Panc1 (cell line): ENCODE measurements at regions of chr1 and their contacts with region 1.

Region 1: GRCh38 chr1:68994096-68994495 is 497.2 kb upstream of the DEPDC1 start:
- DNase-seq: no peak
- ATAC-seq: no peak
- H3K4me3 ChIP-seq: no peak overlapping the region
- H3K27ac ChIP-seq: no peak overlapping the region
- H3K4me1 ChIP-seq: no peaks in the 10 kb centered on the region
- H3K27me3 ChIP-seq: no peaks in the 10 kb centered on the region
- CTCF ChIP-seq: no peak

Region 2: GRCh38 chr1:68703921-68704354 is 290.2 kb before region 1 on chr1:
- CTCF ChIA-PET with region 1: no interaction called
- POLR2A ChIA-PET with region 1: no interaction called
- in situ Hi-C with region 1: no loop called
- intact Hi-C with region 1: loop called (anchors 5 kb)
- DNase-seq: no peak
- ATAC-seq: no peak
- H3K4me3 ChIP-seq: no peak overlapping the region
- H3K27ac ChIP-seq: no peak overlapping the region
- H3K4me1 ChIP-seq: no peaks in the 10 kb centered on the region
- H3K27me3 ChIP-seq: no peaks in the 10 kb centered on the region
- CTCF ChIP-seq: no peak

Region 3: DNA sequence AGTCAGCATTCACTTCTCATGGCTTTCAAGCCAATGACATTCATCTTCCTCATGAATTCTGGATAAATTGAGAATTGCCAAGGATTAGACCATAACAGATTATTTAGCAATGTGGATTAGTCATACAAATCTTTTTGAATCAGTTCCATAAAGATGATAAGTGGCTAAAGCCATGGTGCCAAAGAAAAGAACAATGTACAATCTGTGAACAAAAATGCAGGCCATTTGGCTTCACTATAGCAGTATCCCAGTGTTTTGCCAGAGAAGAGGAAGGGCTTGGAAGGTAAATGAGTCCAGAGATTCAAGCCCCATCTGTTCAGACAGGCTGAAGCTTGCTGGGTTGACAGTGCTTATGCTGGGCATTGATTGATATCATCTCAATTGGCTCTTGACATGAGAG is 197.2 kb after region 1 on chr1:
- CTCF ChIA-PET with region 1: no interaction called
- POLR2A ChIA-PET with region 1: no interaction called
- in situ Hi-C with region 1: no loop called
- intact Hi-C with region 1: no loop called
- DNase-seq: no peak
- ATAC-seq: no peak
- H3K4me3 ChIP-seq: no peak overlapping the region
- H3K27ac ChIP-seq: no peak overlapping the region
- H3K4me1 ChIP-seq: no peaks in the 10 kb centered on the region
- H3K27me3 ChIP-seq: no peaks in the 10 kb centered on the region
- CTCF ChIP-seq: no peak

Region 4: DNA sequence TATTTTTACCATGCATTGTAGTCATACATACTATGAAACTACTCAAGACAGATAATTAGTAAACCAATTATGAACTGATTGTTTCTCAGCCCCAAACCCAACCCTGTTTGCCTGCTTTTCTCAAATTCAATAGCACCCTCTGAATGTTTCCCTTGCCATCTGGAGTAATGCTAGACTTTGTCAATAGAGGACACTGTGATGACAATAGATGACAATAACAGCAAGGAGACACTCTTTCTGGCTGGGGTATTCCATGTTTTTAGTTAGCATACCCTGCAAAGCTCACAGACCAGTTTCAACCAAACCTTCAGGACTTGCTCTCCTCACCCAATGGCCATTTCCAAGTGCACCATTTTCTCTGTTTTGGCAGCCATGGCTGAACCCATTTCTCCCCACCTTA is 465.1 kb after region 1 on chr1:
- CTCF ChIA-PET with region 1: no interaction called
- POLR2A ChIA-PET with region 1: no interaction called
- in situ Hi-C with region 1: no loop called
- intact Hi-C with region 1: no loop called
- DNase-seq: no peak
- ATAC-seq: no peak
- H3K4me3 ChIP-seq: no peak overlapping the region
- H3K27ac ChIP-seq: no peak overlapping the region
- H3K4me1 ChIP-seq: no peaks in the 10 kb centered on the region
- H3K27me3 ChIP-seq: no peaks in the 10 kb centered on the region
- CTCF ChIP-seq: no peak